Activated CD8-positive, alpha-beta memory T cell treated with anti-CD3 and anti-CD28 coated beads, Interleukin-2, amount 10 ng/mL, durations not matched to agents 7 days and 5 days (primary cell): ENCODE measurements at regions of chr14 and their contacts with region 1.

Region 1: GRCh38 chr14:64986578-64987571 is at the start of gene FNTB:
- DNase-seq: peak; percentile 96
- ATAC-seq: peak; percentile 97
- H3K4me3 Mint-ChIP-seq: peak within 1 kb of the TSS; percentile 91
- H3K27ac Mint-ChIP-seq: peak within 1 kb of the TSS; percentile 97
- H3K4me1 Mint-ChIP-seq: peaks cover 52% of the 10 kb centered on the region
- H3K27me3 Mint-ChIP-seq: peaks cover 20% of the 10 kb centered on the region
- total RNA-seq, gene FNTB: 15.0 to 15.6 TPM

Region 2: GRCh38 chr14:64823305-64823861 is 163.5 kb before region 1 on chr14:
- CTCF ChIA-PET with region 1: interaction called, 14 read pairs
- DNase-seq: peak; percentile 74
- ATAC-seq: peak; percentile 85
- H3K4me3 Mint-ChIP-seq: no peak overlapping the region
- H3K27ac Mint-ChIP-seq: no peak overlapping the region
- H3K4me1 Mint-ChIP-seq: peaks cover 4% of the 10 kb centered on the region
- H3K27me3 Mint-ChIP-seq: peaks cover 41% of the 10 kb centered on the region

Region 3: DNA sequence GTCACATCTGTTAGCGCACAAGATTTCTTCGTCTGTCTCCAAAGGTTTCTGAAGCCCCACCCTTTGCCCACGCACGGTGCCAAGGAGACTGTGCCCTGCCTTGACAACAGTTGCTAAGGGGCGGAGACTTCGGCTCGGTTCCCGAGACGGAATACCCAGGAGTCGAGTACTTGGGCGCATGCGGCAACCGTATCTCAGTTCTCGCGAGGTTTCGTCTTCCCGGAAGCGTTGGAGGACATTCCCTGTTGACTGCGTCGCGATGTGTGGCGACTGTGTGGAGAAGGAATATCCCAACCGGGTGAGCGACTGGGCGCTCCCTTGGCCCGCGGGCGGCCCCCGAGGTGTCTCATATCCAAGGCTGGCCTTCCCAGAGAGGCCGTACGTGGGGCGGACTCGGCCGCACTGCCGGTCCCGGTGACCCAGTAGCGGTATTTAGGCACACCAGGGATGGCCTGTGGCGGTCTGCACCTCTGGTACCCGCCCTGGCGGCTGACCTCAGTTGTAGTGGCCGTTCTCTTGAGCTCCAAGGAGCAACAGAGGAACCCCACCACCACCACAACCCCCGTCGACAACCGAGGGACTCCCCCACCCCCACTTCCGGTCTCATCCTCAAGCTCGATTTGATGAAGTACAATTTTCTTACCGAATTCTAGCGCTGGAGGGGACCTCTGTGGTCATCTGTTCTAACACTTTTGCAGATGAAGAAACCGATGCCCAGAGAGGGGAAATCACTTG is 72.5 kb before region 1 on chr14 and contains the start of gene CHURC1:
- CTCF ChIA-PET with region 1: interaction called, 11 read pairs
- DNase-seq: peak; percentile 98
- ATAC-seq: peak; percentile 98
- H3K4me3 Mint-ChIP-seq: peak within 1 kb of the TSS; percentile 78
- H3K27ac Mint-ChIP-seq: peak within 1 kb of the TSS; percentile 91
- H3K4me1 Mint-ChIP-seq: peaks cover 44% of the 10 kb centered on the region
- H3K27me3 Mint-ChIP-seq: peaks cover 18% of the 10 kb centered on the region
- total RNA-seq, gene CHURC1: 49.3 to 57.9 TPM

Region 4: DNA sequence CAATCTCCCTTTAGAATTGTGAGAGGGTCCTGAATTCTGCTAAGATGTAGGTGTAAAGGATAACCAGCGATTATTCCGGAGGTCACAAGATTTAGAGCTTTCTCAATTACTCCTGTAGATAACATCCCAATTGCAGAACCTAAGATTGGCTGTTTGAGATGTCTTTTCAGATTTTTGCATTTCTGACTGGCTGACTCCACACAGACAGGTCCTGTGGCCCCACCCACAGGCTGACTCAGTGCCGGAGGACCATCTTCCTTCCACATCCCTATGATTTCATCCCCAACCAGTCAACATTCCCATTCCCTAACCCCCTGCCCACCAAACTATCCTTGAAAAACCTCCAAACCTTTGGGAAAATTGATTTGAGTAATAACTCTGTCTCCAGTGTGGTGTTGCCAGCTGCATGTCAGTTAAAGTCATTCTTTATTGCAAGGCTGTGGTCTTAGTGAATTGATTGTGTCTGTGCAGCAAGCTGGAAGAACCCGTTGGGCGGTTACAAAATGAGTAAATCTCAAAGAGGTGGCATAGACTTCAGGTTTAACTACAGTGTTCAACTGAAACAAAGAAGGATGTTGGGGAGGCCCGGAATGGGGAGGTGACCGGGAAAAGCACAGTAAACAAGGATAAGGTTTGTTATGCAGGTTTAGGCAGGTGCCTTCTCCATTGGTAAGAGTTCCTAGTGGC is 10.4 kb after region 1 on chr14:
- CTCF ChIA-PET with region 1: interaction called, 12 read pairs
- DNase-seq: peak; percentile 59
- ATAC-seq: peak; percentile 85
- H3K4me3 Mint-ChIP-seq: peak overlapping the region; percentile 72
- H3K27ac Mint-ChIP-seq: peak overlapping the region; percentile 85
- H3K4me1 Mint-ChIP-seq: peaks cover 54% of the 10 kb centered on the region
- H3K27me3 Mint-ChIP-seq: no peaks in the 10 kb centered on the region

Region 5: DNA sequence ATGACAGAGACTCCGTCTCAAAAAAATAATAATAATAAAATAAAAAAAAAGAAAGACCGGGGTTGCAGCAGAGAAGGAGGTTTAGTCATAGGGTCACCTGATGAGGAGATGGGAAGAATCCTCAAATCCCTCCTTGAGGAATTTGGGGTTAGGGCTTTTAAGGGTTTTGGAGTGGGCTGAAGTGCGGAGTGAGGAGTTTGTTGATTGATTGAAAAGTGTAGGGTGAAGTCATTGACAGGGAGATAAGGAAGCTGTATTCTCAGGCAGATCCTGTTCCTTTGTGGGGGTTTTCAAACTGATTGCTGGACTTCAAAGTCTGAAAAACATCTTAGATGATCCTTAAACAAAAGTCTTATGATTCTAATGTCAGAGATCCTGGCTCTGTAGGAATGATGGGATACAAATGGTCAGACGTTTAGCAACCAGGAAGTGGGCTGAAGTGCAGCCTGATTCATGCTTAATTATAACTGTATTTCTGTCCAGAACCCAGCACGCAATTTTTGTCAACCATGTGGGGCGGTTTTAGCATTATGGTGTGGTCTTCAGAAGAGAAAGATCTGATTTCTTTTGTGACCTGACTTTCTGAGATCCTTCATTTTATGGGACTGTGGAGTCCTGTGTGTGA is 15.8 kb after region 1 on chr14:
- CTCF ChIA-PET with region 1: interaction called, 12 read pairs
- DNase-seq: no peak
- ATAC-seq: no peak
- H3K4me3 Mint-ChIP-seq: no peak overlapping the region
- H3K27ac Mint-ChIP-seq: peak overlapping the region; percentile 33
- H3K4me1 Mint-ChIP-seq: peaks cover 46% of the 10 kb centered on the region
- H3K27me3 Mint-ChIP-seq: no peaks in the 10 kb centered on the region

Region 6: DNA sequence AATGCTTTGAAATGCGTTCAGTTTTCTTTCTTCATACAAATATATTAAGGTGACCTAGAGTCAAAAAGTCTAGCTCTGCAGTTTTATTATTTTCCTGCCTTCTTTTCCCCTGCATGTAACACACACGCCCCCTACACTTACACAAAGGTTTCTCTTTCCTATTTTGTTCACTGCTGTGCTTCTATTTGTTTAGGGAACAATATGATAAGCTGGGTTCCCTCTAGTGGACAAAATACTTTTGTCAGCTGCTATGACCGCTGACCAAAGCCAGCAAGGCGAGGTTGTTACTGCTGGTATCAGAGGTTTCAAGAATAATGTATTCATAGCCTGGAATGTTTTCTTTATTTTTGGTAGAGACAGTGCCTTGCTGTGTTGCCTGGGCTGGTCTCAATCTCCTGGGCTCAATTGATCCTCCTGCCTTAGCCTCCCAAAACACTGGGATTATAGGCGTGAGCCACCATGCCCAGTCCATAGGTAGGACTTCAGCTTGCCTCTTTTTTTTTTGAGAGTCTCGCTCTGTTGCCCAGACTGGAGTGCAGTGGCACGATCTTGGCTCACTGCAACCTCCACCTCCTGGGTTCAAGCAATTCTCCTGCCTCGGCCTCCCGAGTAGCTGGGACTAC is 33.2 kb after region 1 on chr14:
- CTCF ChIA-PET with region 1: interaction called, 39 read pairs
- DNase-seq: no peak
- ATAC-seq: peak; percentile 57
- H3K4me3 Mint-ChIP-seq: no peak overlapping the region
- H3K27ac Mint-ChIP-seq: no peak overlapping the region
- H3K4me1 Mint-ChIP-seq: peaks cover 2% of the 10 kb centered on the region
- H3K27me3 Mint-ChIP-seq: no peaks in the 10 kb centered on the region

Region 7: DNA sequence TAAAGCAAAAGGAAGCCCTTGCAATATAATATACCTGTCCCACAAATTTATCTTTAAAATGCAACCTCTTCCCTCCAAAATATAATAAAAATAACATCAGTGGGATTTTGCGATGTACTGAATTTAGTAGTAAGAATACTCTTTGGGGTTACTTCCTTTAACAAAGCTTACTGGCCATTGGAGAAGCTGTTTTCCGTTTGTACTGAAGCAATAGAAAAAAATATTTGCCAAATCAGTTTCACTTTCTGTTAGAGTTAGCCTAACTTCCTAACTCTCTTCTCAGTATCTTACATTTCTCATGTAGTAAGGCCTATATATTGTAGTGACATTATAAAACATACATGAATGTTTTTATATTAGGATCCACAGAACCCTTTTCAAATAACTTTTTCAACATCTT is 111.7 kb after region 1 on chr14:
- CTCF ChIA-PET with region 1: interaction called, 11 read pairs
- DNase-seq: no peak
- ATAC-seq: no peak
- H3K4me3 Mint-ChIP-seq: peak overlapping the region; percentile 73
- H3K27ac Mint-ChIP-seq: peak overlapping the region; percentile 91
- H3K4me1 Mint-ChIP-seq: peaks cover 75% of the 10 kb centered on the region
- H3K27me3 Mint-ChIP-seq: peaks cover 3% of the 10 kb centered on the region